Uterus (tissue), 4 donors: ENCODE measurements at regions of chr13 and their contacts with region 1.

Region 1: GRCh38 chr13:114226699-114227323 is 7.9 kb upstream of the CDC16 start:
- DNase-seq: peak; percentile 87
- H3K4me3 ChIP-seq: no peak overlapping the region
- H3K27ac ChIP-seq: no peak overlapping the region
- H3K4me1 ChIP-seq: no peaks in the 10 kb centered on the region
- H3K27me3 ChIP-seq: no peaks in the 10 kb centered on the region
- CTCF ChIP-seq: peak; percentile 92 to 98 (median 97)
- POLR2A ChIP-seq: no peak

Region 2: DNA sequence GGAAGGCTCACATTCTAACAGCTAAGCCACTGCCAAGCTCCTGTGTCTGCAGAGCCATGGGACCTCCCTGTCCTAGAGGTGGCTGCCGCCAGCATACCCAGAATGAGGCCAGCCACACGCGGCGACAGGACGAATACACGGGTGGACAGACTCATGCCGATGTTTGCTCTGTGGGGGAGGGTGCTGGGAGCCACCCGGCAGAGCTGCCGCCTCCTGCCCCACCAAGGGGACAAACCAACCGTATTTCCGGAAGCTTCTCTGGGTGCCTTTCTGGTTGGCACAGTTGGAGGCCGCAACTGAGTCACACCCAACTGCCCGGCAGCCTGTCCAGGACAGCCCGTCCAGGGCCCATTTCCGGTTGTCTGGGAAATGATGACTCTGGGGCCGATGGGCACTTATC is 273.2 kb before region 1 on chr13:
- intact Hi-C with region 1: loop called (anchors 2 kb)
- DNase-seq: no peak
- H3K4me3 ChIP-seq: no peak overlapping the region
- H3K27ac ChIP-seq: no peak overlapping the region
- H3K4me1 ChIP-seq: peaks cover 0 to 4% of the 10 kb centered on the region in 2 donors
- H3K27me3 ChIP-seq: no peaks in the 10 kb centered on the region
- CTCF ChIP-seq: no peak
- POLR2A ChIP-seq: no peak